ENCODE measurements at regions of chr12 and their contacts with region 1.

Region 1: DNA sequence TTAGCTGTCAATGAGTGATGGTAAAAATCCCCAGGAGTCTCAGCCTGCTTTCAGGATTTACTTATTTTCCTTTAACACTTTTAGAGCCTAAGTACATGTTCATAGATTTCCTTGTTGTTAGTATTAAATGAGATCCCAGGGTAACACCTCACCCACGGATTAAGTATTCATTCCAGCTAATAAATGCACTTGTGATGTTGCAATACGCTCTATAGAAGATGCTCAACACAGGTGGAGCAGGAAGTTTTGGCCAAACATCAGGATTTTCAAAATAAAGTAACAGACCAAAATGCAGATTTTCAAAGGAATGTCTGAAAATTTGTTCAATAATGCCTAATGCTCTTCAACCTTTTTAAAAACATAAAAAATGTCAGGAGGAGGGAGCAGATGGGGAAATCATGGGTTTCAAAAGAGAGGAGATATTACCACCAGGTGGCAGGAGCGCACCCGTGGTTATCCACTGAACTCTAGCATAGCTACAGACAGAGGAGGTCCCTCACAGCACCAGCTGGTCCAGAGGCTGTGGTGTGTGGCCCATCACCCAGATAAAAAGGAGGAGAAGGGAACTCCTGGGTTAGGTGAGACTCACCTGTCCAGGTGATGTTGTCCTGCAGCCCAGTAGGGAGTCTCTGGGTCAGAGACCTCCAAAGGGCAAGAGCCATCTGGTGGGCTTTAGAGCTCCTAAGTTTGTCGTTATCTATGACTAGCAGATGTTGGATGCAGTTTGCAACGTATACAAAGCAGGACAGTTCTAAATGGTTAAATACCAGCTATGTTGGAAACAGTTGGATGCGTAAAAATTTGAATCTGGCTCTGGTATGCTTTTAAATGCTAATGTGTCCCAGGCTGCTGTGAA is 1158.4 kb upstream of the TMEM132C start:
- DNase-seq: peak; percentile 82
- H3K4me3 Mint-ChIP-seq: no peak overlapping the region
- H3K27ac Mint-ChIP-seq: no peak overlapping the region
- H3K4me1 Mint-ChIP-seq: no peaks in the 10 kb centered on the region
- H3K27me3 Mint-ChIP-seq: peaks cover 6% of the 10 kb centered on the region

Region 2: GRCh38 chr12:127293507-127294310 is 185.1 kb after region 1 on chr12:
- intact Hi-C with region 1: loop called (anchors 1 kb)
- DNase-seq: peak; percentile 83
- H3K4me3 Mint-ChIP-seq: no peak overlapping the region
- H3K27ac Mint-ChIP-seq: no peak overlapping the region
- H3K4me1 Mint-ChIP-seq: no peaks in the 10 kb centered on the region
- H3K27me3 Mint-ChIP-seq: no peaks in the 10 kb centered on the region